ENCODE measurements at regions of chr13 and their contacts with region 1.

Region 1: GRCh38 chr13:27353166-27353583 is 71.2 kb upstream of the GTF3A start:
- DNase-seq: peak; percentile 50
- ATAC-seq: peak; percentile 89
- H3K4me3 ChIP-seq: peak overlapping the region in 2 of 5 experiments; percentile 22 to 29
- H3K4me3 Mint-ChIP-seq: peak overlapping the region; percentile 76
- H3K27ac ChIP-seq: peak overlapping the region in 1 of 2 donors; percentile 10
- H3K27ac Mint-ChIP-seq: peak overlapping the region; percentile 71
- H3K4me1 ChIP-seq: peaks cover 4 to 14% of the 10 kb centered on the region in 2 donors
- H3K4me1 Mint-ChIP-seq: peaks cover 17% of the 10 kb centered on the region
- H3K27me3 ChIP-seq: peaks cover 0 to 3% (median 0%) of the 10 kb centered on the region in 4 experiments
- H3K27me3 Mint-ChIP-seq: peaks cover 6% of the 10 kb centered on the region
- CTCF ChIP-seq: no peak

Region 2: DNA sequence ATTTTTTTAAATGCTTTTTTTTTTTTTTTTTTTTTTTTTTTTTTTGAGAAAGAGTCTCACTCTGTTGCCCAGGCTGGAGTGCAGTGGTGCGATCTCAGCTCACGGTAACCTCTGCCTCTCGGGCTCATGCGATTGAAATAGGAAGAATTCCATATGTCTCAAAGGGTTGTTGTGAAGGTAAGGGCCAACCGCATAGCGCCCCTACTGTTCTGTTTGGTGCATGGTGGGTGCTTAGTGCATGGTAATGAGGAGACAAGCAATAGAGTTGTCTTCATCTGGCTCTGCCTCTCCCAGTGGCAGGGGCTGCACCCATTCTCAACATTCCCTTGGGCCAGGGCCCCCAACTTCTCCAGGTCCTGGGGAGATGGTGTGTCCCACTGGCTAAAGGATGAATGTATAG is 13.9 kb before region 1 on chr13:
- CTCF ChIA-PET with region 1: interaction called, 28 read pairs
- POLR2A ChIA-PET with region 1: no interaction called
- intact Hi-C with region 1: no loop called
- DNase-seq: peak; percentile 57
- ATAC-seq: peak; percentile 62
- H3K4me3 ChIP-seq: no peak overlapping the region
- H3K4me3 Mint-ChIP-seq: no peak overlapping the region
- H3K27ac ChIP-seq: no peak overlapping the region
- H3K27ac Mint-ChIP-seq: no peak overlapping the region
- H3K4me1 ChIP-seq: peaks cover 0 to 6% of the 10 kb centered on the region in 2 donors
- H3K4me1 Mint-ChIP-seq: no peaks in the 10 kb centered on the region
- H3K27me3 ChIP-seq: peaks cover 0 to 5% (median 1%) of the 10 kb centered on the region in 4 experiments
- H3K27me3 Mint-ChIP-seq: no peaks in the 10 kb centered on the region
- CTCF ChIP-seq: peak; percentile 68

Measured in B cell (primary cell).